ENCODE measurements at regions of chr2 and their contacts with region 1.

Region 1: GRCh38 chr2:98404556-98405220 is 40.0 kb upstream of the INPP4A start:
- DNase-seq: no peak
- ATAC-seq: no peak
- H3K4me3 ChIP-seq: no peak overlapping the region
- H3K27ac ChIP-seq: no peak overlapping the region
- H3K4me1 ChIP-seq: no peaks in the 10 kb centered on the region
- H3K27me3 ChIP-seq: peaks cover 11% of the 10 kb centered on the region
- CTCF ChIP-seq: no peak
- POLR2A ChIP-seq: no peak
- RAD21 ChIP-seq: no peak

Region 2: GRCh38 chr2:97806738-97807618 is 597.7 kb before region 1 on chr2:
- CTCF ChIA-PET with region 1: no interaction called
- POLR2A ChIA-PET with region 1: no interaction called
- dilution Hi-C with region 1: no loop called
- in situ Hi-C with region 1: no loop called
- intact Hi-C with region 1: no loop called
- DNase-seq: peak; percentile 69
- ATAC-seq: peak; percentile 98
- H3K4me3 ChIP-seq: no peak overlapping the region
- H3K27ac ChIP-seq: no peak overlapping the region
- H3K4me1 ChIP-seq: 0 out of 2 replicates have a peak, but pooled peaks cover 1% of the 10 kb centered on the region
- H3K27me3 ChIP-seq: no peaks in the 10 kb centered on the region
- CTCF ChIP-seq: peak; percentile 94
- POLR2A ChIP-seq: 0 out of 2 replicates have a peak, but pooled peaks have one; percentile 26
- RAD21 ChIP-seq: peak; percentile 98

Region 3: DNA sequence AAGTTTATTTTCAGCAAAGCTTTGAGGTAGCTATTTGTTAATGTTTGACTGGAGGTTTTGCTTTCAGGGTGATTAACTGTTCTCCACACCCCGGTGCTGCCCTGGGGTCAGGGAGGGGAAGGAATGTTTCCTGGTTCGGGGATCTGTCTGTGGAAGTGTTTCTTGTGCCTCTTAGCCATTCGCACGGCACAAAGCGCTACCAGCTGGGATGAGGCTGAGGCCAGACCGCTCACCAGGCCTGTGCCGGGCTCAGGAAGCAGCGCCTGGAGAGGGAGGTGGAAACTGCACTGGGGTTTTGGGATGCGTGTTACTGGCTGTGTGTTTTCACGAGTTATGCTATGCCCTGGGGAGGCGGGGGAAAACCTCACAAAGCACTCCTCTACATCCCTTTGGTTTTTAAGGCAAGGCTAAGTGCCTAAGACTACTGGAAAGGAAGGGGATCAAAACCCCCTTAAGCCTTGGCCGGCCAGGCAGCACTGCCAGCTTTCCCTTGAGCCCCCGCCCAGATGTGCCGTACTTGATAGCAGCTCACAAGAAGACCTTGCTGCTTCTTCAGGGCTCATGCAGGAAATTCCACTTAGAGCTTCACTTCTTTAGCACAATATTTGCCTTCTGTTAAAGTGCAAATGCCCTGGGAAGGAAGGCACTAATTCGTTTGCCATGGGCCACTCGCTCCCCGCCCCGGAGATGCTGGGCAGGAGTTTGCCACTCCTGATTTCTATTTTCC is 124.1 kb before region 1 on chr2:
- CTCF ChIA-PET with region 1: no interaction called
- POLR2A ChIA-PET with region 1: no interaction called
- dilution Hi-C with region 1: no loop called
- in situ Hi-C with region 1: no loop called
- intact Hi-C with region 1: no loop called
- DNase-seq: no peak
- ATAC-seq: peak; percentile 46; the same call in 1 of the 2 replicates
- H3K4me3 ChIP-seq: no peak overlapping the region
- H3K27ac ChIP-seq: no peak overlapping the region
- H3K4me1 ChIP-seq: no peaks in the 10 kb centered on the region
- H3K27me3 ChIP-seq: peaks cover 37% of the 10 kb centered on the region
- CTCF ChIP-seq: no peak
- POLR2A ChIP-seq: no peak
- RAD21 ChIP-seq: no peak

Region 4: DNA sequence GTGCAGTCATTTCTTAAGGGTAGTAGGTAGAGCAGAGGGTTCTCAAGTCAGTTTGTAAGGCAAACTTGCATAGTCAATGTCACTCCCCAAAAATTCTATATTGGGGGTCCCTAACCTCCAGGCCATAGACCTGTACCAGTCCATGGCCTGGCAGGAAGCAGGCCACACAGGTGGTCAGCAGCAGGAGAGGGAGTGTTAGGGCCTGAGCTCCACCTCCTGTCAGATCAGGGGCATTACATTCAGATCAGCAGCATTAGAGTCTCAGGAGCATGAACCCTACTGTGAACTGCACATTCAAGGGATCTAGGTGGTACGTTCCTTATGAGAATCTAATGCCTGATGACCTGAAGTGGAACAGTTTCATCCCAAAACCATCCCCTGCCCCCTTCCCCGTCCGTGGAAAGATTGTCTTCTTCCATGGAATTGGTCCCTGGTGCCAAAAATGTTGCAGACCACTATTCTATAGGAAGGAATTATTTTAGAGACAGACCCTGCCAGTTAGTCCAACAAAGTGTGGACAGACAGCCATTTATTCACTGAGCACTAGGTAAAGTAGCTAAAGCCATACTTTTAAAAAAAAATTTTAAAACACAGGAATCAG is 196.9 kb after region 1 on chr2:
- CTCF ChIA-PET with region 1: no interaction called
- POLR2A ChIA-PET with region 1: no interaction called
- dilution Hi-C with region 1: no loop called
- in situ Hi-C with region 1: loop called (anchors 5 kb)
- intact Hi-C with region 1: no loop called
- DNase-seq: peak; percentile 47
- ATAC-seq: peak; percentile 95
- H3K4me3 ChIP-seq: no peak overlapping the region
- H3K27ac ChIP-seq: no peak overlapping the region
- H3K4me1 ChIP-seq: no peaks in the 10 kb centered on the region; the same call in 1 of the 2 replicates
- H3K27me3 ChIP-seq: no peaks in the 10 kb centered on the region
- CTCF ChIP-seq: peak; percentile 56
- POLR2A ChIP-seq: no peak
- RAD21 ChIP-seq: peak; percentile 76